Activated B cell treated with CpG ODN at 0.5 μM for 24 hours (primary cell): ENCODE measurements at regions of chr13 and their contacts with region 1.

Region 1: DNA sequence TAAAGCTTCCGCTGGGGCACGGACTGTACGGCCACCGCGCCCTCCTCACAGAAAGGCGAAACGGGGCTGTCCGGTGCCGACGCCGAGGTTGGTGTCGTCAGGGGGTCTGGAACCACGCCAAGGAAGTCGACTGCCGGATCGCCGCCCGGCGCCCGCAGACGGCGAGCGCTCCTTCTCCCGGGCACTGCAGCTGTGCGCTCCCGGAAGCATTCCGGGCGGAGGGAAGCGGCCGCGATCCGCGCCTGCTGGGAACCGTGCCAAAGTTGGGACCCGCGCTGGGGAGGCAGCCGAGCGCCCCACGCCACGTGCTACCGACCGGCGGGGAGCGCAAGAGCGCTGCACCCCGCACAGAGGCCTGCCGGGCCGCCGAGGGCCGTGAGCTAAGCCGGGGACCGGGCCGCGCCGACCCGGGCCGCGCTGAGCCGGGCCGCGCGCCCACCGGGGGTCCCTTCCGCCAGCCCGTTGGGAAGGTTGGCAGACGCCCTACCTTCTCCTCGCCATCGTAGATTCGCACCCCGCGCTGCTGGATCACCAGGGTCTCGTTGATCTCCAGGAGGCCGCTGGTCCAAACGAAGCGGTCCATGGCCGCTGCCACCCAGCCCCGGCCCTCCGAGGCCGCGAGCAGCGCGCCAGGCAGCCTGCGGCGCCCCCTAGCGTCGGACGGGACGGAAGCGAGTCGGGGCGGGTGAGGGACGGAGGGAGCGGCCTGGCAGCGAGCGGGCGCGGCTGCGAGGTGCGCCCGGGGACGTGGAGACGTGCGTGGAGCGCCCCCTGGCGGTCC is at the start of gene VPS36:
- DNase-seq: peak; percentile 97
- ATAC-seq: peak; percentile 67
- H3K4me3 Mint-ChIP-seq: peak within 1 kb of the TSS; percentile 97
- H3K27ac Mint-ChIP-seq: peak within 1 kb of the TSS; percentile 93
- H3K4me1 Mint-ChIP-seq: peaks cover 39% of the 10 kb centered on the region
- H3K27me3 Mint-ChIP-seq: no peaks in the 10 kb centered on the region
- CTCF ChIP-seq: peak; percentile 95
- total RNA-seq, gene VPS36: 51.8 and 60.6 TPM in 2 replicates

Region 2: GRCh38 chr13:51803422-51804294 is 646.5 kb before region 1 on chr13 and contains the start of gene DHRS12:
- CTCF ChIA-PET with region 1: no interaction called
- POLR2A ChIA-PET with region 1: no interaction called
- intact Hi-C with region 1: loop called (anchors 5 kb)
- DNase-seq: peak; percentile 84
- ATAC-seq: peak; percentile 81
- H3K4me3 Mint-ChIP-seq: peak within 1 kb of the TSS; percentile 92
- H3K27ac Mint-ChIP-seq: peak within 1 kb of the TSS; percentile 99
- H3K4me1 Mint-ChIP-seq: peaks cover 47% of the 10 kb centered on the region
- H3K27me3 Mint-ChIP-seq: no peaks in the 10 kb centered on the region
- CTCF ChIP-seq: no peak
- total RNA-seq, gene DHRS12: 11.6 and 14.1 TPM in 2 replicates

Region 3: GRCh38 chr13:51895906-51896888 is 554.0 kb before region 1 on chr13:
- CTCF ChIA-PET with region 1: no interaction called
- POLR2A ChIA-PET with region 1: no interaction called
- intact Hi-C with region 1: loop called (anchors 1 kb)
- DNase-seq: no peak
- ATAC-seq: peak; percentile 50
- H3K4me3 Mint-ChIP-seq: no peak overlapping the region
- H3K27ac Mint-ChIP-seq: no peak overlapping the region
- H3K4me1 Mint-ChIP-seq: no peaks in the 10 kb centered on the region
- H3K27me3 Mint-ChIP-seq: peaks cover 16% of the 10 kb centered on the region
- CTCF ChIP-seq: no peak

Region 4: DNA sequence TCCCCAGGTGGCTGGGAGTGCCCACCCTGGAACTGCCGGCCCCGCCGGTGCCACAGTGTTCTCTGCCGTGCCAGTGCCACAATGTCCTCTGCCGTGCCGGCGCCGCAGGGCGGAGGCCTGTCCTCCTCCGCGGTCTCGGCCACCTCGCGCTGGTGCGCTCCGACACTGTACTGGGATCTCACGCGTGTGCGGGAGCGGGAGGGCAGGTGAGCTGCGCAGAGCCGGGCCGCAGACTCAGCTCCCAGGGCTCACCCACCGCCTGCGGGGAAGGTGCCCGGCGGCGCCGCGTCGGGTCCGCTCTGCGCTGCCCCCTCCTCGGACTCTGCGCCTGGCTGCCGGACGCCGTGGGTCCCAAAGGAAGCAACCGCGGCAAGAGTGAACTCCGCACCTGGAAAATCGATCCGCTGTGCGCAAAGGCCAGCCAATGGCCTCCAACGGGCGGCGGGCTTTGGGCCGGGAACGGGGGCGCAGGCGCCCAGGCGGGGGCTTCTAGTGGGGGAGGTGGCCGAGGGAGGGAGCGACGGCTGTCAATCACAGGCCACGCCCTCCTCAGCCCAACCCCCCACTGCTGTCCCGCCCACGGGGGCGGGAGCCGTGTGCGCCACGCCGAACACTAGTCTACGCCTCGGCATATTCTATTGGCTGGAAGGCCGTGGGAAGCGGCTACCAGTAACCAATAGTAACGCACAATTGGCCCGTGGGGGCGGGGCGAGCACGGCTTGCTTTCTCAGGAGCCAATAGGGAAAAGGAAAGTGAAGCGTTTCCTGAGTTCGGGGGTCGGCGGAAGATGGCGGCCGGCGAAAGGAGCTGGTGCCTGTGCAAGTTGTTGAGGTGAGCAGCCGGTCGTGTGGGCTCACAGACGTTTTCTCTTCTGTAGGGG is 438.3 kb before region 1 on chr13 and contains the start of gene ALG11:
- CTCF ChIA-PET with region 1: interaction called, 3 read pairs
- POLR2A ChIA-PET with region 1: no interaction called
- intact Hi-C with region 1: loop called (anchors 1 kb)
- DNase-seq: peak; percentile 98
- ATAC-seq: peak; percentile 99
- H3K4me3 Mint-ChIP-seq: peak within 1 kb of the TSS; percentile 99
- H3K27ac Mint-ChIP-seq: peak within 1 kb of the TSS; percentile 89
- H3K4me1 Mint-ChIP-seq: peaks cover 19% of the 10 kb centered on the region
- H3K27me3 Mint-ChIP-seq: peaks cover 16% of the 10 kb centered on the region
- CTCF ChIP-seq: no peak
- total RNA-seq, gene ALG11: 31.8 and 36.9 TPM in 2 replicates

Region 5: GRCh38 chr13:52194184-52194868 is 255.9 kb before region 1 on chr13:
- CTCF ChIA-PET with region 1: no interaction called
- POLR2A ChIA-PET with region 1: interaction called, 12 read pairs
- intact Hi-C with region 1: loop called (anchors 1 kb)
- DNase-seq: peak; percentile 90
- ATAC-seq: peak; percentile 86
- H3K4me3 Mint-ChIP-seq: peak overlapping the region; percentile 99
- H3K27ac Mint-ChIP-seq: peak overlapping the region; percentile 98
- H3K4me1 Mint-ChIP-seq: peaks cover 31% of the 10 kb centered on the region
- H3K27me3 Mint-ChIP-seq: no peaks in the 10 kb centered on the region
- CTCF ChIP-seq: no peak

Region 6: GRCh38 chr13:52405767-52406494 is 44.3 kb before region 1 on chr13 and contains the start of gene THSD1:
- CTCF ChIA-PET with region 1: no interaction called
- POLR2A ChIA-PET with region 1: no interaction called
- intact Hi-C with region 1: loop called (anchors 2 kb)
- DNase-seq: peak; percentile 18
- ATAC-seq: peak; percentile 62
- H3K4me3 Mint-ChIP-seq: peak within 1 kb of the TSS; percentile 77
- H3K27ac Mint-ChIP-seq: no peak within 1 kb of the TSS
- H3K4me1 Mint-ChIP-seq: peaks cover 29% of the 10 kb centered on the region
- H3K27me3 Mint-ChIP-seq: peaks cover 14% of the 10 kb centered on the region
- CTCF ChIP-seq: no peak
- total RNA-seq, gene THSD1: 0.31 and 0.46 TPM in 2 replicates

Region 7: GRCh38 chr13:52652196-52652979 is 202.2 kb after region 1 on chr13 and contains the start of gene SUGT1:
- CTCF ChIA-PET with region 1: interaction called, 18 read pairs
- POLR2A ChIA-PET with region 1: interaction called, 31 read pairs
- intact Hi-C with region 1: loop called (anchors 1 kb)
- DNase-seq: peak; percentile 96
- ATAC-seq: peak; percentile 94
- H3K4me3 Mint-ChIP-seq: no peak within 1 kb of the TSS
- H3K27ac Mint-ChIP-seq: no peak within 1 kb of the TSS
- H3K4me1 Mint-ChIP-seq: peaks cover 11% of the 10 kb centered on the region
- H3K27me3 Mint-ChIP-seq: no peaks in the 10 kb centered on the region
- CTCF ChIP-seq: no peak
- total RNA-seq, gene SUGT1: 38.6 and 38.7 TPM in 2 replicates